CD4-positive, alpha-beta memory T cell (primary cell): ENCODE measurements at regions of chr1 and their contacts with region 1.

Region 1: GRCh38 chr1:27634177-27634984 is 604 bp downstream of the FGR start:
- DNase-seq: peak; percentile 41 to 62 (median 46)
- H3K4me3 ChIP-seq: peak overlapping the region; percentile 17 to 38
- H3K4me3 Mint-ChIP-seq: peak overlapping the region; percentile 62 to 80 (median 72)
- H3K27ac ChIP-seq: peak overlapping the region; percentile 62
- H3K27ac Mint-ChIP-seq: peak overlapping the region; percentile 41 to 90 (median 87)
- H3K4me1 ChIP-seq: peaks cover 66% of the 10 kb centered on the region
- H3K4me1 Mint-ChIP-seq: peaks cover 51 to 82% (median 62%) of the 10 kb centered on the region in 4 donors
- H3K27me3 ChIP-seq: no peaks in the 10 kb centered on the region
- H3K27me3 Mint-ChIP-seq: no peaks in the 10 kb centered on the region

Region 2: GRCh38 chr1:27616441-27616840 is 17.9 kb before region 1 on chr1:
- CTCF ChIA-PET with region 1: interaction called, 13 read pairs
- POLR2A ChIA-PET with region 1: interaction called, 11 read pairs
- intact Hi-C with region 1: no loop called
- DNase-seq: no peak
- H3K4me3 ChIP-seq: no peak overlapping the region
- H3K4me3 Mint-ChIP-seq: peak overlapping the region in 1 of 8 donors; percentile 38
- H3K27ac ChIP-seq: no peak overlapping the region
- H3K27ac Mint-ChIP-seq: peak overlapping the region; percentile 52 to 94 (median 85)
- H3K4me1 ChIP-seq: peaks cover 49% of the 10 kb centered on the region
- H3K4me1 Mint-ChIP-seq: peaks cover 45 to 77% (median 57%) of the 10 kb centered on the region in 4 donors
- H3K27me3 ChIP-seq: no peaks in the 10 kb centered on the region
- H3K27me3 Mint-ChIP-seq: no peaks in the 10 kb centered on the region

Region 3: GRCh38 chr1:27773826-27774445 is 139.6 kb after region 1 on chr1:
- CTCF ChIA-PET with region 1: no interaction called
- POLR2A ChIA-PET with region 1: no interaction called
- intact Hi-C with region 1: no loop called
- DNase-seq: peak in 2 of 5 donors; percentile 6 to 41
- H3K4me3 ChIP-seq: peak overlapping the region; percentile 80 to 96
- H3K4me3 Mint-ChIP-seq: peak overlapping the region; percentile 91 to 98 (median 96)
- H3K27ac ChIP-seq: peak overlapping the region; percentile 87
- H3K27ac Mint-ChIP-seq: peak overlapping the region; percentile 86 to 99 (median 97)
- H3K4me1 ChIP-seq: peaks cover 32% of the 10 kb centered on the region
- H3K4me1 Mint-ChIP-seq: peaks cover 27 to 43% (median 31%) of the 10 kb centered on the region in 4 donors
- H3K27me3 ChIP-seq: no peaks in the 10 kb centered on the region
- H3K27me3 Mint-ChIP-seq: no peaks in the 10 kb centered on the region

Region 4: GRCh38 chr1:27884006-27884954 is 249.9 kb after region 1 on chr1:
- CTCF ChIA-PET with region 1: no interaction called
- POLR2A ChIA-PET with region 1: no interaction called
- intact Hi-C with region 1: no loop called
- DNase-seq: no peak
- H3K4me3 ChIP-seq: no peak overlapping the region
- H3K4me3 Mint-ChIP-seq: peak overlapping the region in 2 of 8 donors; percentile 10 to 54
- H3K27ac ChIP-seq: no peak overlapping the region
- H3K27ac Mint-ChIP-seq: peak overlapping the region; percentile 27 to 92 (median 72)
- H3K4me1 ChIP-seq: peaks cover 45% of the 10 kb centered on the region
- H3K4me1 Mint-ChIP-seq: peaks cover 26 to 73% (median 53%) of the 10 kb centered on the region in 4 donors
- H3K27me3 ChIP-seq: no peaks in the 10 kb centered on the region
- H3K27me3 Mint-ChIP-seq: no peaks in the 10 kb centered on the region